ENCODE measurements at regions of chr10 and their contacts with region 1.

Region 1: GRCh38 chr10:70575874-70576802 is 26.4 kb downstream of the PRF1 start:
- DNase-seq: peak; percentile 38
- H3K4me3 Mint-ChIP-seq: no peak overlapping the region
- H3K27ac Mint-ChIP-seq: peak overlapping the region; percentile 26
- H3K4me1 Mint-ChIP-seq: peaks cover 43% of the 10 kb centered on the region
- H3K27me3 Mint-ChIP-seq: no peaks in the 10 kb centered on the region

Region 2: DNA sequence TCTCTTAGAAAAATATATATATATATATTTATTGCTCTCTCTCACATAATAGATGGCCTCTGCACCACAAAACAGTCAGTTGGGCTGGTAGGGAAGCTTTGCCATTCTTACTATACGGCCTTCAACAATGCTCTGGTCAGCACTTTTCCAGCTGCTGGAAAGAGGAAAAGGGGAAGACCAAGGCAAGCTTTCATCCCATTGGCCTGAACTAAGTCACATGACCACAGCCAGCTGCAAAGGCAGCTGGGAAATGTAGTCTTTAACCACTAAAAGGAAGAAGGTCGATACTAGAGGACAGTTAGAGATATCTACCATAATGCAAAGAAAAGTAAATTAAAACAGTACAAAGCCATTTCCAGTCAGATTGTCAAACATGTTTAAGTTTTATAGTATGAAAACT is 581.9 kb before region 1 on chr10:
- CTCF ChIA-PET with region 1: no interaction called
- POLR2A ChIA-PET with region 1: no interaction called
- intact Hi-C with region 1: no loop called
- DNase-seq: peak; percentile 18
- H3K4me3 Mint-ChIP-seq: no peak overlapping the region
- H3K27ac Mint-ChIP-seq: no peak overlapping the region
- H3K4me1 Mint-ChIP-seq: no peaks in the 10 kb centered on the region
- H3K27me3 Mint-ChIP-seq: peaks cover 12% of the 10 kb centered on the region

Region 3: DNA sequence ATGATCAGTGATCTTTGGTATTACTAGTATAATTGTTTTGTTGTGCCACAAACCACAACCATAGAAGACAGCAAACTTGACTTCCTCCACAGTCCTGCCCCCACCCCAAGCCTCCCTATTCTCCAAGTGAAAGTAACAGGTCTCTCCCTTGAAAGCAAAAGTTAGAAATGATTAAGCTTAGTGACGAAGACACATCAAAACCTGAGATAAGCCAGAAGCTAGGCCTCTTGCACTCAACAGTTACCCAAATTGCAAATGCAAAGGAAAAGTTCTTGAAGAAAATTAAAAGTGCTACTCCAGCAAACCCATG is 413.3 kb before region 1 on chr10:
- CTCF ChIA-PET with region 1: no interaction called
- POLR2A ChIA-PET with region 1: no interaction called
- intact Hi-C with region 1: loop called (anchors 2 kb)
- DNase-seq: peak; percentile 82
- H3K4me3 Mint-ChIP-seq: peak overlapping the region; percentile 40
- H3K27ac Mint-ChIP-seq: peak overlapping the region; percentile 93
- H3K4me1 Mint-ChIP-seq: peaks cover 69% of the 10 kb centered on the region
- H3K27me3 Mint-ChIP-seq: no peaks in the 10 kb centered on the region

Region 4: DNA sequence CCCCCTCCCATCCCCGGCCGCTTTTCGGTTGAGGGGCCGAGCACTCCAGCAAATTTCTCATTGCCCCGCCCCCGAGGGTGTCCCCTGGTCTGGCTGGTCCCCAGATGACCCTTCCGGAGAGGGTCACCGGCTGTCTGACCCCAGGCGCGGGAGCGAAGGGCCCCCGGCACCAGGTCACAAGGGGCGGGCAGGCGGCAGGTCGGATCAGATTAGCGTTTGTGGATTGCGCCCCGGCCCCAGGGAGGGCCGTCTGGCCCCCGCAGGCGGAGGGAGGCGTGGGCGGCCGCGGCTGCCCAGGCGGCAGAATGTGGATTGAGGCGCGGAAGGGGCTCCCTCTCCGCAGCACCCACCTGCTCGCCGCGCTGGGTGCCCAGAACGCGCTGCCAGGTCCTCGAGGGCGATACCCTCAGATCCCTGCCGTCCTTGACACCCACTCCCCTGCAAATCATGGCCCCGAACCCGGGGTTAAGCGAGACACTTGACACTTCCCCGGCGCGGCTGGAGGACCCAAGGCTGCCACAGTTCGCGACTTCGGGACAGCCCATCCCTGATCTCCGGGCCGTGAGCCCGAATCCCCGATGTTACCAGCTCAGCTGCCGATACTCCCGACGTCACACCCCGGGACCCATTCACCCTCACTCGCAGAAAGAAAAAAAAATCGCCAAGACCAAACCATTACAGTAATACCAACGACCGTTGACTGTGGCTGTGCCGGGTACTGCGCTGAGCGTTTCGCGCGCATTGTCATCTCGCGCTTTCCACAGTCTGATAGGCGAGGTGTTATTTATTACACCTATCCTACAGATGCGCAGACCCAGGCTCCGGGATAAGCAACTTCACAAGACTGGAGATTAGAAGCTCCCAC is 135.6 kb before region 1 on chr10:
- CTCF ChIA-PET with region 1: no interaction called
- POLR2A ChIA-PET with region 1: no interaction called
- intact Hi-C with region 1: no loop called
- DNase-seq: peak; percentile 43
- H3K4me3 Mint-ChIP-seq: peak overlapping the region; percentile 55
- H3K27ac Mint-ChIP-seq: no peak overlapping the region
- H3K4me1 Mint-ChIP-seq: peaks cover 13% of the 10 kb centered on the region
- H3K27me3 Mint-ChIP-seq: peaks cover 35% of the 10 kb centered on the region

Region 5: GRCh38 chr10:70528726-70529362 is 47.3 kb before region 1 on chr10:
- CTCF ChIA-PET with region 1: no interaction called
- POLR2A ChIA-PET with region 1: no interaction called
- intact Hi-C with region 1: no loop called
- DNase-seq: no peak
- H3K4me3 Mint-ChIP-seq: no peak overlapping the region
- H3K27ac Mint-ChIP-seq: no peak overlapping the region
- H3K4me1 Mint-ChIP-seq: no peaks in the 10 kb centered on the region
- H3K27me3 Mint-ChIP-seq: no peaks in the 10 kb centered on the region

Region 6: DNA sequence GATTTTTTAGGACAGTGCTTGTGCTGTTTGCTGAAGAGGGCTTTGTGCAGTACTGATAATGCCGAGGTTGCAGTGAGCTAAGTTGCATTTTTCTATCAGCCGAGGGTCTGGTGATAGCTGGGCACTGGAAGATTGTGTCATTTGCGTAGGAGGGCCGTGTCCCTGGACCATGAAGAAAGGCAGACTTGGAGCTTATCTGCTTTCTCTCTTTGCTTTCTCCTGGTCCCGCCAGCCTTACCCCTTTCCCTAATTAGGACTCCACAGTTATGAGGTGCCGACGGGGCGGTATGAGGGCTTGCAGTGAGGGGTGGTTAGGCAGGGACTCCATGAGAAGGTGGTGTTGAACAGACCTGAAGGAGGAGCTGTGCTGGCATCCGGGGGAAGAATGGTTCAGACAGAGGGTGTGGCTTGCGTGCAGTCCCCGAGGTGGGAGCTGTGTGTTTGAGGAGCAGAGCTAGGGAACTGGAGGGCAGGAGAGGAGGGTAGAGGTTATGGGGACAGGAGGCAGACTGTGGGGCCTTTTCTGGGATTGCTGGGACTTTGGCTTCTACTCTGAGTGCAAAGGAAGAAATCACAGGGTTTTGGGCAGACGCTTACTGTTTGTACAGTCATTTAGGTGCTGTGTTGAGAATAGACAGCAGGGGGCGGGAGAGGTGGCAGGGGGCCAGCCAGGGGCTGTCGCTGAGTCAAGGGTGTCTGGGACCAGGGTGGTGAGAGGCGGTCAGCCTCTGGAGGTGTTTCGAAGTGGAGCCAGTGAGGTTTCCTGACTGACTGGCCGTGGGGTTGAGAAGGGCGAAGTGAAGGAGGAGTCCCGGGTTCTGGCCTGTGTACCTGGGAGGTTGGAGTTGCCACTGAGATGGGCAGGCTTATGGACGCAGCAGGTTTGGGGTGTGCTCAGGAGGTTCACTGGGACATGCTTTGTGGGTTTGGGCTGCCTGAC is 17.0 kb before region 1 on chr10:
- CTCF ChIA-PET with region 1: interaction called, 8 read pairs
- POLR2A ChIA-PET with region 1: interaction called, 3 read pairs
- intact Hi-C with region 1: loop called (anchors 1 kb)
- DNase-seq: peak; percentile 83
- H3K4me3 Mint-ChIP-seq: peak overlapping the region; percentile 64
- H3K27ac Mint-ChIP-seq: peak overlapping the region; percentile 5
- H3K4me1 Mint-ChIP-seq: peaks cover 11% of the 10 kb centered on the region
- H3K27me3 Mint-ChIP-seq: no peaks in the 10 kb centered on the region

Region 7: GRCh38 chr10:70602665-70603448 is 26.7 kb after region 1 on chr10 and contains the start of gene PRF1:
- CTCF ChIA-PET with region 1: no interaction called
- POLR2A ChIA-PET with region 1: no interaction called
- intact Hi-C with region 1: loop called (anchors 1 kb)
- DNase-seq: peak; percentile 87
- H3K4me3 Mint-ChIP-seq: peak within 1 kb of the TSS; percentile 79
- H3K27ac Mint-ChIP-seq: peak within 1 kb of the TSS; percentile 82
- H3K4me1 Mint-ChIP-seq: peaks cover 25% of the 10 kb centered on the region
- H3K27me3 Mint-ChIP-seq: no peaks in the 10 kb centered on the region
- total RNA-seq, gene PRF1: 32.4 to 32.6 TPM

Region 8: DNA sequence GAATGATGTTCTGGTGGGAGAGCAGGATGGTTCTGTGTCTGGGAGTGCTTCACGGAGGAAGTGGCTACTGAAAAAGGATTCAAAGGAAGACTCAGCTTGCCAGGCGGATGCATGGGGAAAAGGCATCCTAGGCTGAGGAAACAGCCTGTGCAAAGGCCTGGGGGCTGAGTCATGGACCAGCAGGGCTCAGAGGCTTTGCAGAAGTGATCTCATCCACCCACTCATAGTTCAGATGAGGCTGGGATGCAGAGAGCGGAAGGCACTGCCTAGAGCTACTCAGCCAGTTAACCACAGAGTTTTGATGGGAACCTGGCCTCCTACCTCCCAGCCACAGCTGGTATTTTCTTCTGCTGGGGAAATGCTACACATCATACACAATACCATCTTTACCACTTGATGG is 80.4 kb after region 1 on chr10:
- CTCF ChIA-PET with region 1: no interaction called
- POLR2A ChIA-PET with region 1: interaction called, 3 read pairs
- intact Hi-C with region 1: loop called (anchors 2 kb)
- DNase-seq: peak; percentile 82
- H3K4me3 Mint-ChIP-seq: no peak overlapping the region
- H3K27ac Mint-ChIP-seq: peak overlapping the region; percentile 56
- H3K4me1 Mint-ChIP-seq: peaks cover 14% of the 10 kb centered on the region
- H3K27me3 Mint-ChIP-seq: peaks cover 8% of the 10 kb centered on the region

Region 9: GRCh38 chr10:71766702-71767419 is 1190.7 kb after region 1 on chr10:
- CTCF ChIA-PET with region 1: no interaction called
- POLR2A ChIA-PET with region 1: no interaction called
- intact Hi-C with region 1: loop called (anchors 10 kb)
- DNase-seq: peak; percentile 65
- H3K4me3 Mint-ChIP-seq: peak overlapping the region; percentile 38
- H3K27ac Mint-ChIP-seq: peak overlapping the region; percentile 96
- H3K4me1 Mint-ChIP-seq: peaks cover 93% of the 10 kb centered on the region
- H3K27me3 Mint-ChIP-seq: no peaks in the 10 kb centered on the region